ENCODE measurements at regions of chr6 and their contacts with region 1.

Region 1: DNA sequence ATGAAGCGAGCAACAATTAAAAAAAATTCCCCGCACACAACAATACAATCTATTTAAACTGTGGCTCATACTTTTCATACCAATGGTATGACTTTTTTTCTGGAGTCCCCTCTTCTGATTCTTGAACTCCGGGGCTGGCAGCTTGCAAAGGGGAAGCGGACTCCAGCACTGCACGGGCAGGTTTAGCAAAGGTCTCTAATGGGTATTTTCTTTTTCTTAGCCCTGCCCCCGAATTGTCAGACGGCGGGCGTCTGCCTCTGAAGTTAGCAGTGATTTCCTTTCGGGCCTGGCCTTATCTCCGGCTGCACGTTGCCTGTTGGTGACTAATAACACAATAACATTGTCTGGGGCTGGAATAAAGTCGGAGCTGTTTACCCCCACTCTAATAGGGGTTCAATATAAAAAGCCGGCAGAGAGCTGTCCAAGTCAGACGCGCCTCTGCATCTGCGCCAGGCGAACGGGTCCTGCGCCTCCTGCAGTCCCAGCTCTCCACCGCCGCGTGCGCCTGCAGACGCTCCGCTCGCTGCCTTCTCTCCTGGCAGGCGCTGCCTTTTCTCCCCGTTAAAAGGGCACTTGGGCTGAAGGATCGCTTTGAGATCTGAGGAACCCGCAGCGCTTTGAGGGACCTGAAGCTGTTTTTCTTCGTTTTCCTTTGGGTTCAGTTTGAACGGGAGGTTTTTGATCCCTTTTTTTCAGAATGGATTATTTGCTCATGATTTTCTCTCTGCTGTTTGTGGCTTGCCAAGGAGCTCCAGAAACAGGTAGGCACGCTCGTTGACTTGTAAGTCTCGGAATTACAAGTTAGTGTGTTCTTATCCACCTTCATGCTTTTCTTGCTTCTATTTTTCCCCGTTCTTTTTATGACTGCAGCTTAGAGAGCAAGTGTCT is at the start of gene EDN1:
- DNase-seq: peak in 1 of 2 donors; percentile 61
- ATAC-seq: peak; percentile 44 to 76 (median 70)
- H3K4me3 ChIP-seq: peak within 1 kb of the TSS; percentile 2
- H3K4me3 Mint-ChIP-seq: peak within 1 kb of the TSS; percentile 83
- H3K27ac ChIP-seq: no peak within 1 kb of the TSS
- H3K27ac Mint-ChIP-seq: no peak within 1 kb of the TSS
- H3K4me1 ChIP-seq: peaks cover 10% of the 10 kb centered on the region
- H3K4me1 Mint-ChIP-seq: peaks cover 18 to 19% of the 10 kb centered on the region in 2 donors
- H3K27me3 ChIP-seq: peaks cover 16% of the 10 kb centered on the region
- H3K27me3 Mint-ChIP-seq: peaks cover 40 to 58% of the 10 kb centered on the region in 2 donors
- CTCF ChIP-seq: no peak
- total RNA-seq, gene EDN1: 0.63 to 1.5 (median 0.71) TPM

Region 2: DNA sequence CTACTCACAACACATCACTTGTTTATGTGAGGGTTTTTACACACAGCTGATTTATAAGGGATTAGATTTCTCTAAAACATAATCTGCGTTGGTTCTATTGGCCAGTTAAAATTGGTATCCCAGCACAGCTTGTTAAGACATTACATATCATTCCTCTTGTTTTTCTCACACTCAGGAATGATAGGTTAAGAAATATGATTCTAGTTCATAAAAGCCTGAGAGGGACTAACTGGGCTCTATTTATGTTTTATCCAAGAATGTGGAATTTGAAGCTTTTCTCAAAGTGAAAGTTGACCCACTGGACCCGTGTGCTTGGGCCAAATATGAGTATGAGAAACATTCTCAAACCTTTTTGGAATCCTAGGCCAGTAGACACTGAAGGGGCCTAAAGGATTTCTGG is 635.3 kb before region 1 on chr6:
- intact Hi-C with region 1: loop called (anchors 1 kb)
- DNase-seq: no peak
- ATAC-seq: no peak
- H3K4me3 ChIP-seq: no peak overlapping the region
- H3K4me3 Mint-ChIP-seq: no peak overlapping the region
- H3K27ac ChIP-seq: no peak overlapping the region
- H3K27ac Mint-ChIP-seq: no peak overlapping the region
- H3K4me1 ChIP-seq: no peaks in the 10 kb centered on the region
- H3K4me1 Mint-ChIP-seq: no peaks in the 10 kb centered on the region
- H3K27me3 ChIP-seq: no peaks in the 10 kb centered on the region
- H3K27me3 Mint-ChIP-seq: peaks cover 11 to 14% of the 10 kb centered on the region in 2 donors
- CTCF ChIP-seq: no peak

Measured in natural killer cell (primary cell).